ENCODE measurements at regions of chr13 and their contacts with region 1.

Region 1: GRCh38 chr13:20566898-20567874 is at the start of gene IFT88:
- DNase-seq: peak; percentile 88
- H3K4me3 Mint-ChIP-seq: peak within 1 kb of the TSS; percentile 84
- H3K27ac Mint-ChIP-seq: peak within 1 kb of the TSS; percentile 79
- H3K4me1 Mint-ChIP-seq: peaks cover 29% of the 10 kb centered on the region
- H3K27me3 Mint-ChIP-seq: no peaks in the 10 kb centered on the region
- total RNA-seq, gene IFT88: 4.7 to 5.3 TPM

Region 2: DNA sequence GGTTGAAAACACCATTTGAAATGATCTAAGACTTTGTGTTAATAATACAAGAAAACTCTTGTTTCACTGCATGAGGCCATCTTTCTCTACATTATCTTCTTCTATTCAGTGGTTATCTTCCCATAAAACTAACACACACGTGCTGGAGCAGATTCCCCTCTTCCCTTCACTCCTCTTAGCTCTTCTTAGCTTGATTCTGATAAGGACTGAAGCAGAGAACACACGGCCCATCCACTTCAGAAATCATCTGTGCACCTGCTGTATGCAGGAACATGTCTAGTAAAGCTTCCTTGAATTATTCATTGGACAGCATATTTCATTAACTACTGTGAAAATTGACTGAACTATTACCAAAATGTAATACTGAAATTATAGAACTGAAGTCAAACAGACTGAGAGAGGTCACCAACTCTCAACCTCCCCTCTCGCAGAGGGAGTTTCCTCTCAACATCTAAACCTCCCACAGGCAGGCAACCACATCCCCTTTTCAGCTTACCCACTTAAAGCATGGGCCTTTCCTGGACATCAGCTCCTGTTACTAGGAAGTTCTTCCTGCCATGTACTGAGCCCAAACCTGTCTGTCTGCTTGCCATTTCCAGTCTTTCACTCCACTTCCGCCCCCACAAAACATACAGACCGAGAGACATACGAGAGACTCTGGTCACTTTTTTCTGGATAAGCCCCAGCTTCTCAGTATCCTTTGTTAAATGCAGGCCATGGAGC is 155.4 kb before region 1 on chr13:
- CTCF ChIA-PET with region 1: no interaction called
- POLR2A ChIA-PET with region 1: no interaction called
- intact Hi-C with region 1: loop called (anchors 5 kb)
- DNase-seq: peak; percentile 75
- H3K4me3 Mint-ChIP-seq: peak overlapping the region; percentile 9
- H3K27ac Mint-ChIP-seq: peak overlapping the region; percentile 78
- H3K4me1 Mint-ChIP-seq: peaks cover 22% of the 10 kb centered on the region
- H3K27me3 Mint-ChIP-seq: no peaks in the 10 kb centered on the region

Region 3: GRCh38 chr13:20525690-20526544 is 41.3 kb before region 1 on chr13 and contains the start of gene CRYL1:
- CTCF ChIA-PET with region 1: interaction called, 3 read pairs
- POLR2A ChIA-PET with region 1: no interaction called
- intact Hi-C with region 1: loop called (anchors 2 kb)
- DNase-seq: peak; percentile 77
- H3K4me3 Mint-ChIP-seq: peak within 1 kb of the TSS; percentile 84
- H3K27ac Mint-ChIP-seq: peak within 1 kb of the TSS; percentile 86
- H3K4me1 Mint-ChIP-seq: peaks cover 33% of the 10 kb centered on the region
- H3K27me3 Mint-ChIP-seq: peaks cover 5% of the 10 kb centered on the region
- total RNA-seq, gene CRYL1: 17.5 to 18.2 TPM

Measured in activated CD4-positive, alpha-beta memory T cell treated with anti-CD3 and anti-CD28 coated beads for 36 hours (primary cell).